Caco-2 (cell line): ENCODE measurements at regions of chr14 and their contacts with region 1.

Region 1: DNA sequence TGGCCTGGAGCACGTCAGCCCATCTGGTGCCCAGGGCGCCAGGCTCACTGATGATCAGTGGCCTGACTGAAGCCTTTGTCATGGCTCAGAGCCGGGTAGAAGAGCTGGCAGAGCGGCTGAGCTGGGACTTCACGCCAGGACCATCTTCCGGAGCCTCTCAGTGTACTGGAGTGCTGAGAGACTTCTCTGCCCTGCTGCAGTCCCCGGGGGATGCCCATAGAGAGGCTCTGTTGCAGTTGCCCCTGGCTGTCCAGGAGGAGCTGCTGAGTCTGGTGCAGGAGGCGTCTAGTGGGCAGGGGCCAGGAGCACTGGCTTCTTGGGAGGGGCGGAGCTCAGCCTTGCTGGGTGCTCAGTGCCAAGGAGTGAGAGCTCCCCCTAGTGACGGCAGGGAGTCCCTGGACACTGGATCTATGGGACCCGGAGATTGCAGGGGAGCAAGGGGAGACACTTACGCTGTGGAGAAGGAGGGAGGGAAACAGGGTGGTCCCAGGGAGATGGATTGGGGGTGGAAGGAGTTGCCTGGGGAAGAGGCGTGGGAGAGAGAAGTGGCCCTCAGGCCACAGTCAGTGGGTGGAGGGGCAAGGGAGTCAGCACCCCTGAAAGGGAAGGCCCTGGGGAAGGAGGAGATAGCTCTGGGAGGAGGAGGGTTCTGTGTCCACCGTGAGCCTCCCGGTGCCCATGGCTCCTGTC is 2.0 kb downstream of the KHNYN start:
- DNase-seq: peak; percentile 93 to 94
- H3K4me3 ChIP-seq: no peak overlapping the region
- H3K4me3 Mint-ChIP-seq: peak overlapping the region; percentile 78
- H3K27ac Mint-ChIP-seq: peak overlapping the region; percentile 56
- H3K4me1 ChIP-seq: peaks cover 41% of the 10 kb centered on the region
- H3K4me1 Mint-ChIP-seq: peaks cover 27% of the 10 kb centered on the region
- H3K27me3 ChIP-seq: no peaks in the 10 kb centered on the region
- H3K27me3 Mint-ChIP-seq: no peaks in the 10 kb centered on the region
- CTCF ChIP-seq: peak; percentile 96

Region 2: GRCh38 chr14:24310646-24311604 is 120.8 kb before region 1 on chr14 and contains the start of gene LTB4R:
- CTCF ChIA-PET with region 1: interaction called, 13 read pairs
- POLR2A ChIA-PET with region 1: no interaction called
- intact Hi-C with region 1: no loop called
- DNase-seq: no peak
- H3K4me3 ChIP-seq: no peak within 1 kb of the TSS
- H3K4me3 Mint-ChIP-seq: no peak within 1 kb of the TSS
- H3K27ac Mint-ChIP-seq: no peak within 1 kb of the TSS
- H3K4me1 ChIP-seq: peaks cover 25% of the 10 kb centered on the region
- H3K4me1 Mint-ChIP-seq: peaks cover 27% of the 10 kb centered on the region
- H3K27me3 ChIP-seq: no peaks in the 10 kb centered on the region
- H3K27me3 Mint-ChIP-seq: no peaks in the 10 kb centered on the region
- CTCF ChIP-seq: no peak
- total RNA-seq, gene LTB4R: 7.3 and 7.8 TPM in 2 replicates

Region 3: GRCh38 chr14:24366721-24367513 is 64.8 kb before region 1 on chr14:
- CTCF ChIA-PET with region 1: interaction called, 111 read pairs
- POLR2A ChIA-PET with region 1: interaction called, 12 read pairs
- intact Hi-C with region 1: loop called (anchors 1 kb)
- DNase-seq: peak; percentile 94 to 96
- H3K4me3 ChIP-seq: peak overlapping the region; percentile 67
- H3K4me3 Mint-ChIP-seq: peak overlapping the region; percentile 85
- H3K27ac Mint-ChIP-seq: peak overlapping the region; percentile 71
- H3K4me1 ChIP-seq: peaks cover 4% of the 10 kb centered on the region; the same call in 1 of the 2 replicates
- H3K4me1 Mint-ChIP-seq: peaks cover 13% of the 10 kb centered on the region
- H3K27me3 ChIP-seq: no peaks in the 10 kb centered on the region
- H3K27me3 Mint-ChIP-seq: no peaks in the 10 kb centered on the region
- CTCF ChIP-seq: no peak

Region 4: DNA sequence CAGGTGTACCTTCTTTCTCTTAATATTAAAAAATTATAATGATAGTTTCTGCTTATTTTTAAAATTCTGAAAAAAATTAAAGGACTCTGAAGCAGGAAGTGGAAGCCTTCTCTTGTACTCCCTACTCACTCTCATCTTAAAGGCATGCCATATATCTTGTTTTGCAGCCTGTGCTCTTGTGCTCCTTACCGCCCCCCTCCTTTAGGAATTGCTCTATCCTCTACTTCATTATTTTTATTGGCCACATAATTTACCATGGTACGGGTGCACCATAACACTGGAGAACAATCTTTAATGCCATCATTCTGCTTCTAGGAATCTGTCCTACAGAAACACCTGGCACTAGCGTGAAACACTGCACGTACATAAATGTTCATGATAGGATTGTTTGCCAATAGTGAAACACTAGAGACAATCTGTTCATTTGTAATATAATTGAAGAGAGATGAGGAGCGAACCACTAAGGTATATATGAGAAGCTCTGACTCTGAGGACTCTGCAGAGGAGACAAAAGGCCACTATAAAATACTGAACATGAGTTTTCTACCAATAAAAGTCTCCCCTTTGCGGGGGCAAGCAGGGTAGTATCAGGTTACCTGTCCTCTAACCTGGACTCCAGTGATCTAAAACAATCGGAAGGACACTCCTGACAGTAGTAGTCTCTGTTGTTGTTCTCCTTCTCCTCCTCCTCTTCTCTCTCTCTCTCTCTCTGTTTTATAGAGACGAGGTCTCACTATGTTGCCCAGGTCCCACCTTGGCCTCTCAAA is 39.2 kb before region 1 on chr14:
- CTCF ChIA-PET with region 1: interaction called, 4 read pairs
- POLR2A ChIA-PET with region 1: no interaction called
- intact Hi-C with region 1: loop called (anchors 1 kb)
- DNase-seq: peak in 1 of 2 experiments; percentile 37
- H3K4me3 ChIP-seq: no peak overlapping the region
- H3K4me3 Mint-ChIP-seq: no peak overlapping the region
- H3K27ac Mint-ChIP-seq: no peak overlapping the region
- H3K4me1 ChIP-seq: peaks cover 5% of the 10 kb centered on the region
- H3K4me1 Mint-ChIP-seq: peaks cover 21% of the 10 kb centered on the region
- H3K27me3 ChIP-seq: no peaks in the 10 kb centered on the region
- H3K27me3 Mint-ChIP-seq: no peaks in the 10 kb centered on the region
- CTCF ChIP-seq: no peak